MCF 10A (cell line): ENCODE measurements at regions of chr16 and their contacts with region 1.

Region 1: GRCh38 chr16:73047518-73048291 is at the start of gene ZFHX3:
- DNase-seq: peak; percentile 75
- H3K4me3 Mint-ChIP-seq: peak within 1 kb of the TSS; percentile 89
- H3K27ac Mint-ChIP-seq: peak within 1 kb of the TSS; percentile 73
- H3K4me1 Mint-ChIP-seq: peaks cover 46% of the 10 kb centered on the region
- H3K27me3 Mint-ChIP-seq: no peaks in the 10 kb centered on the region
- CTCF ChIP-seq: peak; percentile 18
- total RNA-seq, gene ZFHX3: 21.1 and 27.4 TPM in 2 replicates

Region 2: DNA sequence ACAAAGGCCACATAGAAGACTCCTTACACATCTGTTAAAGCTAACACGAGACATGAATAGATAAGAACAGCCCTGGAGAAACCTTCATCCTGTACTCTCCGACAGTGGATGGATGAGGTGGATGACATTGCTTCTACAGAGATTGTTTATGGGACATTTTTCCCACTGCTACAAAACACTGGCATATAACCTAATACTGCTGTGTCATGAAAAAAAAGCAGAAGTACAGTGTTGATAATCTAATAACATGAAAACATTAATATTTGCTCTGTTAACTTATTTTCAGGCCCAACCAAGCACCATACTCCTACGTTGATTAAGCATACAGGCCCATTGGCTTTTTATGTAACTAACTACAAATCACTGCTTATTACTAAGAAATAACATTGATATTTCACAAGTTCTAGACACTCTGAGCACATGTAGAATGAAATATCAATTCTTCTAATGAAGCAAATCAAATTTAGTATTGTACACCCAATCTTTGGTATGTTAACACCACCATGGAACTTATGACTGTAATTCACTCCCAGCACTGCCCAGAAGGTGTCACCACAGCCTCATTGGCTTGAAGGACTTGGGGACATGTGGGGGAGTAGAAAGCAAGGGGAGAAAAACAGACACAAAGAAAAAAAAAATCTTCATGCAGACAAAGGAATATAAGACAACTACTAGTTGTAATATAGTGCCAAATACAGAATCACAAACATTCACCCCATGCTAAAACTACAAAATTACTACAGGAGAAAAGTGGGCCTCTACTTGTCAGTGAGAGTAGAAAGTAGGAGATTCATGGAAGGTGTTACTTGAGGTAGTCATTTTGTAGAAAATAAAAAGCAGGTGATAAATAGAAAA is 545.7 kb before region 1 on chr16:
- CTCF ChIA-PET with region 1: interaction called, 7 read pairs
- POLR2A ChIA-PET with region 1: interaction called, 3 read pairs
- intact Hi-C with region 1: loop called (anchors 1 kb)
- DNase-seq: peak; percentile 71
- H3K4me3 Mint-ChIP-seq: no peak overlapping the region
- H3K27ac Mint-ChIP-seq: no peak overlapping the region
- H3K4me1 Mint-ChIP-seq: peaks cover 6% of the 10 kb centered on the region
- H3K27me3 Mint-ChIP-seq: no peaks in the 10 kb centered on the region
- CTCF ChIP-seq: peak; percentile 93

Region 3: GRCh38 chr16:72876221-72876620 is 171.5 kb before region 1 on chr16:
- CTCF ChIA-PET with region 1: interaction called, 6 read pairs
- POLR2A ChIA-PET with region 1: interaction called, 11 read pairs
- intact Hi-C with region 1: no loop called
- DNase-seq: peak; percentile 77
- H3K4me3 Mint-ChIP-seq: peak overlapping the region; percentile 38
- H3K27ac Mint-ChIP-seq: peak overlapping the region; percentile 93
- H3K4me1 Mint-ChIP-seq: peaks cover 31% of the 10 kb centered on the region
- H3K27me3 Mint-ChIP-seq: no peaks in the 10 kb centered on the region
- CTCF ChIP-seq: no peak

Region 4: DNA sequence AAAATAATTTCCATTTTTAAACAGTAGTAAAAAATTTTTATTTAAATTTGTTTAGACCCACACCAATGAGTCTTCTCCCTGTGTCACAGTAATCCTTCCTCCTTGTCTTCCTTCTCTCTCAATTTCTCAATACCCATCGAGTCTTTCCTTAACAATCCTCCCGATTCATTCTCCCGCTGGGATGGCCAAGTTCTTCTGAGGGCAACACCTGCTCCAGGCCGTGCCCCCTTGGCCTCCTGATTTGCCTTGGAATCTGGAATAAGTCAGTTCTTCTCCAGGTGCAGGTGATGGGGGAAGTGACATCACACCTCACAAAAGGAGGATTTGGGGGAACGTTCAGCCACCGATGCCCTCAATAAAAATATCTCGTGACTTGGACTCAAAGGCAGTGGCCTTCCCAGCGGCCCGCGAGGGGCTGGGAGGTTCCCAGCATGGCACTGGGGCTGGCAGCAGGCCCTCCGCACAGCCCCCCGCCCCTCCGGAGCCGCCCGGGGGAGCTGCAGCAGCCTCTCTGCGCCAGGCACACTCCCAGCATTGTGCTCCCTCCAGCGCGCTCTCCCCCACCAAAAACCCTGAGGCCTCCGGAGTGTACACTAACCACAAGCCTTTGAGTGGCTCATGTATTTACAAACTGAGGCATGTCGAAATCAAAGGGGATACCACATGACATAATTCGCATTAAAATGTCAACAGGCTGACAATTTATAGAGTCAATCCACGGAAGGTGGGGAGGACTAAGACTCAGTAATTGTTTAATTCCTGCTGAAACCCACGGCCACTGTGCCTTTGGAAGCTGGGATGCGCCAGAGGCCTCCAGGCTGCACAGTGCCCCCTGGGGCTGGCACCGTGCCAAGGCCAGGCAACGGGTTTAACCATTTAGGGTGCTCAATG is 120.3 kb before region 1 on chr16:
- CTCF ChIA-PET with region 1: no interaction called
- POLR2A ChIA-PET with region 1: no interaction called
- intact Hi-C with region 1: loop called (anchors 2 kb)
- DNase-seq: peak; percentile 94
- H3K4me3 Mint-ChIP-seq: no peak overlapping the region
- H3K27ac Mint-ChIP-seq: no peak overlapping the region
- H3K4me1 Mint-ChIP-seq: peaks cover 9% of the 10 kb centered on the region
- H3K27me3 Mint-ChIP-seq: no peaks in the 10 kb centered on the region
- CTCF ChIP-seq: no peak

Region 5: DNA sequence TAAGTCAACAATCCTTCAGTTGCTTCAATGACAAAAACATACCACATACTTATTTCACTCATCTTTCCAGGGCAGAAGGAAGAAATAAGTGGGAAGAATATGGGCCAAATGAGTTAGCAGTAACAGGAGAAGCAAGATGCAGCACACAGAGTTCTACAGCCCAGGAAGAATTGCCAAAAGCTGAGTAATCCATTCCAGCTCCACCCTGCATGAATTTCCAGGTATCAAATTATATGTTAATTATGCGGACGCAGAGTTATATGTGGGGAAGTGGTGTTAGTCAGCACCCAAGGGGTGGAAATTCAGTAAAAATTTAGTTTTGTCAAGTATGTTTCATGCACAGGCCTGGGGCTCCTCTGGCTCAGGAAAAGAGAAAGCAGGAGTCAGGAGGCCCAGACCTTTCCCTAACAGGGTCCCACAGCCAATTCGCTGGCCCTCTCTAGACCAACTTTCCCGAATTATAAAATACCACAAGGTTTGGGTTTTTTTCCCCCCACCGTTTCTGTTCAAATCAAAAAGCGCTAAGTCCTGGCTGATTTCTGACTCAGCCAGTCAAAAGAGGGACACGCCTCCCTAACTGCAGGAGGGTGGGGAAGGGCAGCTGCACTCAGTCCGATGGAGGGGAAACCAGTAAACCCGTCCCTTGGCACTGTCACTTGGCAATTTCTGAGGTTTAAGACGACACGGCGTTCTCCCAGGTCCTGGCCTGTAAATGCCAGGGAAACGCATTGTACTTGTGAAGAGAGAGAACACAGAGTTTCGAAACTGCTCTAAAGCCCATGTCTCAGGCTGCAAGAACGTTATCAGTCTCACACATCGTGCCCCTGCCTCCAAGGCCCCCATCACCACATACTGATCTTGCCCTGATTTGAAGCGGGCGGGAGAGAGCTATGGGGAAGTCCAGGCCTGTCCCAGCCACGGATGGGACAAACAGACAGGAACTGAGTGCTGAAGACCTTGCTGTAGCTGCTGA is 57.8 kb before region 1 on chr16:
- CTCF ChIA-PET with region 1: interaction called, 6 read pairs
- POLR2A ChIA-PET with region 1: interaction called, 29 read pairs
- intact Hi-C with region 1: loop called (anchors 2 kb)
- DNase-seq: peak; percentile 94
- H3K4me3 Mint-ChIP-seq: peak overlapping the region; percentile 73
- H3K27ac Mint-ChIP-seq: peak overlapping the region; percentile 95
- H3K4me1 Mint-ChIP-seq: peaks cover 73% of the 10 kb centered on the region
- H3K27me3 Mint-ChIP-seq: no peaks in the 10 kb centered on the region
- CTCF ChIP-seq: no peak

Region 6: DNA sequence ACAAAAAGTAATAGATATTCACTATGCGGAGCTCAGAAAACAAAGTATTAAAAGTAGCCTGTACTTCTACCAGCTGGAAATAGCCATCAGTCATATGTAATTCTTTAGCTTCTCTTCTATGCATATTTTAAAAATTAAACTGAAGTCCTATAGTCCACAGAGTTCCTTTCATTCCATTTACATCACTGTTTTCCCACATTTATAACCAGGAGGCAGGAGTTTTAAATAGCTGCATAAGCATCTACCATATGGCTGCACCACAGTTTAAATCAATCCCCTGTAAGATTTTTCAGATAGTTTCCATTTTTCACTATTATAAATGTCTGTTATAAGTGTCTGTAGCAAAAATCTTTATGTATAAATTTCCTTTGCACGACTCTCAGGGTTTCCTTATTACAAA is 44.8 kb before region 1 on chr16:
- CTCF ChIA-PET with region 1: no interaction called
- POLR2A ChIA-PET with region 1: no interaction called
- intact Hi-C with region 1: no loop called
- DNase-seq: no peak
- H3K4me3 Mint-ChIP-seq: no peak overlapping the region
- H3K27ac Mint-ChIP-seq: no peak overlapping the region
- H3K4me1 Mint-ChIP-seq: peaks cover 17% of the 10 kb centered on the region
- H3K27me3 Mint-ChIP-seq: no peaks in the 10 kb centered on the region
- CTCF ChIP-seq: no peak

Region 7: DNA sequence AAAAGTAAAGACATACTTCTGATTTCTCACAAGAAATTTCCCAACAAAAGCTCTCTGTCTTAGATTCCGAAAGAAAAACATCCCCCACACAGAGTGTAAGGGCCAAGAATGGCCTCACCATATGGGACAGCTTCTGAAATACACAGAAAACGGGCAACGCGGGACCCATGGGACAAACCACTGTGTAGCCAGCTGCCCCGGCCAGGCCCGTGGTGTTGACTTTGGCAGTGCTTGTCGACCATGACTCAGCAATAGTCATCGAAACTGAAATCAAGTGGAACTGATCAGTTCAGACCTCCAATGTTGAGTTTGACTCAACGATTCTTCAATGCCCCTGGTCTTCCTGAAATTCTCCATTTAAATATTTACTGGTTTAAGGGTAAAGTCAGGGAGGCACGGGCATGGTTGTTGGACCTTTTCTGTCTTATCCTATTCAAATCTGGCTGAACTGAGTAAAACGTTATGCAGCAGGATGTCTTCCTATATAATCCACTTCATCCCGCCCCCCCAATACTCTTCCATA is 27.3 kb before region 1 on chr16:
- CTCF ChIA-PET with region 1: interaction called, 10 read pairs
- POLR2A ChIA-PET with region 1: no interaction called
- intact Hi-C with region 1: no loop called
- DNase-seq: peak; percentile 90
- H3K4me3 Mint-ChIP-seq: peak overlapping the region; percentile 45
- H3K27ac Mint-ChIP-seq: peak overlapping the region; percentile 10
- H3K4me1 Mint-ChIP-seq: peaks cover 33% of the 10 kb centered on the region
- H3K27me3 Mint-ChIP-seq: no peaks in the 10 kb centered on the region
- CTCF ChIP-seq: no peak

Region 8: GRCh38 chr16:73082608-73083007 is 34.9 kb after region 1 on chr16:
- CTCF ChIA-PET with region 1: no interaction called
- POLR2A ChIA-PET with region 1: interaction called, 12 read pairs
- intact Hi-C with region 1: no loop called
- DNase-seq: peak; percentile 92
- H3K4me3 Mint-ChIP-seq: peak overlapping the region; percentile 23
- H3K27ac Mint-ChIP-seq: peak overlapping the region; percentile 96
- H3K4me1 Mint-ChIP-seq: no peaks in the 10 kb centered on the region
- H3K27me3 Mint-ChIP-seq: no peaks in the 10 kb centered on the region
- CTCF ChIP-seq: no peak

Region 9: DNA sequence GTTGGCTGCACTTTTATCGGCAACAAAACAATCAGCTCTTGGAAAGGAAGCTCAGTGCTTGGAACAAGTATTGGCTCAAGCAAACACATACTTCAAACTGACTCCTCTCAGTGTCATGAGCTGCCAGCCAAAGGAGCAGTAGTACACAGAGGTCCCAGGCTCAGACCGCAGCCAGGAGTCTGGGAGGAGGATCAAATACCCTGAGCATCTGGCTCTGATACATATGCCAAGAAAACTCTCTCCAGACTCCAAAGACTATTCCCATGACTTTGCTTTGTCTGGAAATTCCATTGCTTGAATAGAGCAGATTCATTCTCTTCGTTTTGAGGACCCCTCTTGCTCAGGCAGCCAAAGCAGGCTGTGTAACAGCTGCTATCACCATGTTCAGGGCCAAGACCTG is 747.3 kb after region 1 on chr16:
- CTCF ChIA-PET with region 1: no interaction called
- POLR2A ChIA-PET with region 1: no interaction called
- intact Hi-C with region 1: no loop called
- DNase-seq: no peak
- H3K4me3 Mint-ChIP-seq: no peak overlapping the region
- H3K27ac Mint-ChIP-seq: no peak overlapping the region
- H3K4me1 Mint-ChIP-seq: no peaks in the 10 kb centered on the region
- H3K27me3 Mint-ChIP-seq: peaks cover 77% of the 10 kb centered on the region
- CTCF ChIP-seq: no peak